ENCODE measurements at regions of chr10 and their contacts with region 1.

Region 1: DNA sequence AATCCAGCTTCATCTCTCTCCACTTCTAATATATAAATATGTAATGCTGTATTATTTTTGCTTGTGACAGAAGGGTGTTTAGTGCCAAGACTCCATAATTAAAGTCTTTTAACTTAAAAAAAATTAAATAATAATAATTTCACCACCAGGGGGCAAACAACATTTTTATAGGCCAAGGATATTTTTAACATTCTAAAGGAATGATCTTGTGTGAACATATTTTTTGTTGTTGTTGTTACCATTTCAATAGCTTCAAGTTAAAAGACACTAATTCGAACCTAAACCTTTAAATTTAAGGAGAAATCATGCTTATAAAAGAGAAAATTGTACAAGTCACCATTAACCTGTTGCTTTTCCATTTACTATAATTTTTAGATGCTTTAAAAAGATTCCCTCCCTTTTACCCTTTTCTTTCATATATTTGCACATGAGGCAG is 7.5 kb upstream of the DNAJC1 start:
- DNase-seq: no peak
- H3K4me3 ChIP-seq: no peak overlapping the region
- H3K27ac ChIP-seq: no peak overlapping the region
- H3K4me1 ChIP-seq: peaks cover 0 to 2% of the 10 kb centered on the region in 2 donors
- H3K27me3 ChIP-seq: no peaks in the 10 kb centered on the region
- CTCF ChIP-seq: peak; percentile 18 to 74 (median 55)
- POLR2A ChIP-seq: no peak

Region 2: DNA sequence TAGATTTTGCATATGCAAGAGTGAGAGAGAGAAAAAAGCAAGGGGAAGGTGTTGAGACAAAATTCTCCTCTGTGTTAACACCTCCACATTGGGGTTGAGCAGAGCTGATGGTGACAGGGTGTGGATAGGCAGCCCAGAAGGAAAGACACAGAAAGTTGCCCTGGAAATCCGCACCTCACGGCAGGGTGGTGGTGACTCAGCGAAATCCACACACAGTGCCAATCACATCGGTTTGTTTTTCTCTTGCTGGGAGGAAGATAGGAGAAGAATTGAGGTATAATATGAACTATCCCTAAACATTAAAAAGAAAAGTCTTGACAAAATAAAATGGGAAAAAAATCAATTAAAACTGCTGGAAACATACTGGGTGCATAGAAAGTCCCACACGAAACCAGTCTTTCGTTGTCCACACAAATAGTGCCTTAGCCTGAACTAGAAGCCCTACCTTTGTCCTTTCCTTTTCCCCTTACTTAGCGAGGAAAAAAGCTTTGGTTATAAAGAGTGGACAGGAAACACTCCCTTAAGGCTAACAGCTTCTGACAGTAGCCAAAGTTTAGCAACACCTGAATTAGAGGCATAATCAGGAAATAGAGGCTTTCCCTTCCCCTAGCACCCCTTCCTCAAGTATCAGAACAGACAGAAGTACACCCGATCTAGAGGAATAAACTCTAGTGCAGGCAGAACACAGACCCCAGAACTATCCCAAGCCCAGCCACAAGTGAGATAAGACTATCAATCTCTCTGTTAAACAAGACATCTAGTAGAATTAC is 31.8 kb after region 1 on chr10:
- intact Hi-C with region 1: no loop called
- DNase-seq: no peak
- H3K4me3 ChIP-seq: no peak overlapping the region
- H3K27ac ChIP-seq: no peak overlapping the region
- H3K4me1 ChIP-seq: no peaks in the 10 kb centered on the region
- H3K27me3 ChIP-seq: no peaks in the 10 kb centered on the region
- CTCF ChIP-seq: no peak
- POLR2A ChIP-seq: no peak

Region 3: DNA sequence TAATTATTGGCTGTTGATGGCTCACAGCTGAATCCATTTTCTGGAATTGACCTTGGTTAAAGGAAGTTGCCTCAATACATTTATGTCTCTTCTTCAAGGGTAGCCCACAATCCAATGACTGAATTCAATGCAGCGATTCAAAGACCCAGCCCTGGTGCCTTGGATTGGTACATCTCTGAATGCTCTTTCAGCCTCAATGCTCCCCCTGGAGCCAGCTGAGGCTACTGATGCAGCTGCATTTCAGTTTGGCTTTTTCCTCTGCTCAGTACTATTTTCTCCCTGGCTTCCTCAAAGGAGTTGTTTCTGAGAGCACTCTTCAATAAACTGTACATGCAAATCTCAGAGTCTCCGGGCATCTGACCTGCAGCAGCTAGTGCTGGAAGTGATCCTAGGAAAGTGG is 207.5 kb after region 1 on chr10:
- intact Hi-C with region 1: loop called (anchors 10 kb)
- DNase-seq: no peak
- H3K4me3 ChIP-seq: no peak overlapping the region
- H3K27ac ChIP-seq: no peak overlapping the region
- H3K4me1 ChIP-seq: no peaks in the 10 kb centered on the region
- H3K27me3 ChIP-seq: peaks cover 5% of the 10 kb centered on the region
- CTCF ChIP-seq: no peak
- POLR2A ChIP-seq: no peak

Region 4: GRCh38 chr10:23067939-23068775 is 1057.2 kb after region 1 on chr10:
- intact Hi-C with region 1: loop called in 1 of 2 experiments (anchors 10 kb)
- DNase-seq: peak; percentile 59 to 88 (median 81)
- H3K4me3 ChIP-seq: no peak overlapping the region
- H3K27ac ChIP-seq: no peak overlapping the region
- H3K4me1 ChIP-seq: no peaks in the 10 kb centered on the region
- H3K27me3 ChIP-seq: no peaks in the 10 kb centered on the region
- CTCF ChIP-seq: peak; percentile 47 to 86 (median 66)
- POLR2A ChIP-seq: no peak